Activated naive CD4-positive, alpha-beta T cell treated with anti-CD3 and anti-CD28 coated beads for 36 hours (primary cell): ENCODE measurements at regions of chr5 and their contacts with region 1.

Region 1: DNA sequence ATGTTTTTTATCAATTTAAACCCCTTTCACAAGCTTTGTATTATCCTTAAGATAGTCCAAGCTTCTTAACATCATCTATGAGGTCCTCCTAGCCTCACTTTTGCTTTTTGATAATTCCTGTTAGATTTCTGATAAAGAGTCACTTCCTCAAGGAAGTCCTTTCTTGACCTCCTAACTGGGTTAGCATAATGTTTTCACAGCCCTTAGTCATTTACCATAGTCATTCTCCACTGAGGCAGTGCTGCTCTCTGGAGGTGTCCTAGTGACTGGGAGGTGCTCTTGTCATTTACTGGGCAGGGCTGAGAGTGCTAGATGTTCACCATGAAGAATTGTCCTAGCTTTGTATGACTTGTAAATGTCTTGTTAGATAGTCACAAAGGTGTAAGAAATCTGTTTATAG is 26.4 kb downstream of the TNPO1 start:
- DNase-seq: peak; percentile 56
- H3K4me3 Mint-ChIP-seq: no peak overlapping the region
- H3K27ac Mint-ChIP-seq: no peak overlapping the region
- H3K4me1 Mint-ChIP-seq: peaks cover 31% of the 10 kb centered on the region
- H3K27me3 Mint-ChIP-seq: no peaks in the 10 kb centered on the region

Region 2: GRCh38 chr5:72611118-72611730 is 231.6 kb before region 1 on chr5:
- CTCF ChIA-PET with region 1: interaction called, 9 read pairs
- intact Hi-C with region 1: loop called (anchors 1 kb)
- DNase-seq: peak; percentile 60
- H3K4me3 Mint-ChIP-seq: no peak overlapping the region
- H3K27ac Mint-ChIP-seq: no peak overlapping the region
- H3K4me1 Mint-ChIP-seq: peaks cover 3% of the 10 kb centered on the region
- H3K27me3 Mint-ChIP-seq: peaks cover 2% of the 10 kb centered on the region

Region 3: DNA sequence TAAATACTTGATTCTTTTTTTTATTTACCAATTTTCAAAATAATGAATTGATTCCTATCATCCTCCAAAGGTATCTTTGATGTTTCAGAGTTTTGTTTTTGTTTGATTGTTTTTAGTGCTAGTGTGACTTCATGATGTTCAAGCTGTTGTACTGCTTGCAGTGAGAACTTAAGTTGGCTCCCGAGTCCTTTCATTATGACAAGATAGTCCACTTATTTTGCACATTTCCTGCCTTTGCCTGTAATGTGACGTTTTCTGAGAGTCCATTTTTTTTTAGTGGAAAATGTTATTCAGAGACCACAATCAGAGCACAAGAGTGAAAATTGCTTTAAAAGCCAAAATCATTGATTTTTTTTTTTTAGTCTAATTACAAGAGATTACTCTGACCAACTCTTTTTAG is 52.9 kb after region 1 on chr5:
- CTCF ChIA-PET with region 1: interaction called, 10 read pairs
- intact Hi-C with region 1: no loop called
- DNase-seq: peak; percentile 6
- H3K4me3 Mint-ChIP-seq: no peak overlapping the region
- H3K27ac Mint-ChIP-seq: peak overlapping the region; percentile 77
- H3K4me1 Mint-ChIP-seq: peaks cover 9% of the 10 kb centered on the region
- H3K27me3 Mint-ChIP-seq: no peaks in the 10 kb centered on the region